Aorta (tissue), 5 donors: ENCODE measurements at regions of chr14 and their contacts with region 1.

Region 1: GRCh38 chr14:49982501-49982951 is 89.6 kb downstream of the ARF6 start:
- DNase-seq: peak; percentile 68 to 82
- ATAC-seq: peak; percentile 63
- H3K4me3 ChIP-seq: no peak overlapping the region
- H3K27ac ChIP-seq: peak overlapping the region in 1 of 2 donors; percentile 60
- H3K4me1 ChIP-seq: peaks cover 0 to 3% of the 10 kb centered on the region in 2 donors
- H3K27me3 ChIP-seq: no peaks in the 10 kb centered on the region

Region 2: DNA sequence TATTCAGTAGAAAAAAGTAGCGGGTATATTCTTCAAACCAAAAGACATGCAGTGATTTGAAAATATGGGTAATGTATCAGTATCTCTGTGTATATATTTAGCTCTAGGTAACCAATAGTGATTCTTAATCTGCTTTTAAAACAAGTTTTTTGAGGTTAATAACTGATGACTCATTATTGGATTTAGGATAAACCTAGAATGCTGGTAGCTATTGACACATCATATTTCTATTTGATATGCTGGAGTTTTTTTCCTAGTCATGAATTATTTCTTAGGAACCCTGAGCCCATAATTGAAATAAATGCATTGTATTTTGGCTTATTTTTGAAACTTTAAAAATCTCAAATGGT is 74.1 kb before region 1 on chr14:
- intact Hi-C with region 1: loop called in 1 of 2 experiments (anchors 5 kb)
- DNase-seq: no peak
- ATAC-seq: no peak
- H3K4me3 ChIP-seq: no peak overlapping the region
- H3K27ac ChIP-seq: no peak overlapping the region
- H3K4me1 ChIP-seq: no peaks in the 10 kb centered on the region
- H3K27me3 ChIP-seq: no peaks in the 10 kb centered on the region

Region 3: GRCh38 chr14:49971156-49972130 is 11.1 kb before region 1 on chr14:
- intact Hi-C with region 1: no loop called
- DNase-seq: no peak
- ATAC-seq: no peak
- H3K4me3 ChIP-seq: no peak overlapping the region
- H3K27ac ChIP-seq: peak overlapping the region in 1 of 2 donors; percentile 11
- H3K4me1 ChIP-seq: peaks cover 0 to 7% of the 10 kb centered on the region in 2 donors
- H3K27me3 ChIP-seq: no peaks in the 10 kb centered on the region

Region 4: DNA sequence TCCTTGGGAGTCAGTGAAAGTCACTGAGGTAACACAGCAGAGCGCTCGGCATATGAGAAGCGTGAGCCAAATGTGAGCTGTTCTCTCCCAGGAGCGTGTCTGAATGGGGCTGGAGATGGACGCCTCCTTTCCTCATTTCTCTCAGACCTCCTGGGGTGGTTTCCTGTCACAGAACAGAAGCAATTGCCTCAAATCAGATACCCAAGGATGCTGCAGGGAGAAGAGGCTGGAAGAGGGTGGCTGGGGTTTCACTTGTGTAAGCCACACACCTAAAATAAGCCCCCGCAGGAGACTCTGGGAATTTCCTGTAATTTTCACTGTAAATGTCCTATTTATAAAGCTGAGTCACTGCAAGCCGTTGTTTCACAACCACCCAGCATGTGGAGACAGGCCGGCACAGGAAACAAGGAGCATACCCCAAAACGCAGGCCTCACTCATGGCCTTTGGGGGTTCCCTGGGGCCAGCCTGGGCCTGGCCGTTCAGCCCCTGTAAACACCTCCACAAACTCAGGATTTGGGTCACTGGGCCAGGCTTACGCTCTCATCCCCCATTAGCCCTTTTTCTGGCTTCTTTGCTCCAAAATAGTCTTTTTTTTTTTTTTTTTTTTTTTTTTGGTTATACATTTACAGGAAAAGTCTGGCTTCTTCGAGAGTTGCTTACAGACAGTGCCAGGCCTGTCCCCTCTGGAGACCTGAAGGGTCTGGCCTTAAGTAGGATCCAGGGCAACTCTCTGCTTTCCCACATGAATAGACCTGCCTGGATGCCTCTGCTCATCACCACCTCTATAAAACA is 78.5 kb after region 1 on chr14:
- intact Hi-C with region 1: loop called in 1 of 2 experiments (anchors 5 kb)
- DNase-seq: peak; percentile 75 to 79
- ATAC-seq: peak; percentile 88
- H3K4me3 ChIP-seq: no peak overlapping the region
- H3K27ac ChIP-seq: peak overlapping the region; percentile 79 to 94
- H3K4me1 ChIP-seq: peaks cover 7% of the 10 kb centered on the region in 2 donors
- H3K27me3 ChIP-seq: no peaks in the 10 kb centered on the region

Region 5: DNA sequence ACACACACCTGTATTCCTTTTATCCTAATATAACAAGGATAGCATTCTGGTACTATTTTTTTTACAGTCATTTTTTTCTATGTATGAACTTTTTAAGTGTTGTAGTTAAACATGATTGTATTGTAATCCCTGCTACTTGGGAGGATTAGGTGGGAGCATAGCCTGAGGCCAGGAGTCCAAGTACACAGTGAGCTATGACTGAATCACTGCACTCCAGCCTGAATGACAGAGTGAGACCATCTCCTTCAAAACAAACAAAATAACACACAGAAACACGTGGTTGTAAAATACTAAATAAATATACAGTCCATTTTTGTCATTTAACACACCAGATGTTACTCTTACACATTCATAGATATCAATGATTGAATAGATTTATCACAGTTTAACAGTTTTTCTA is 492.9 kb after region 1 on chr14:
- intact Hi-C with region 1: no loop called
- DNase-seq: no peak
- ATAC-seq: no peak
- H3K4me3 ChIP-seq: no peak overlapping the region
- H3K27ac ChIP-seq: no peak overlapping the region
- H3K4me1 ChIP-seq: no peaks in the 10 kb centered on the region
- H3K27me3 ChIP-seq: no peaks in the 10 kb centered on the region